CD4-positive, alpha-beta T cell (primary cell): ENCODE measurements at regions of chr19 and their contacts with region 1.

Region 1: DNA sequence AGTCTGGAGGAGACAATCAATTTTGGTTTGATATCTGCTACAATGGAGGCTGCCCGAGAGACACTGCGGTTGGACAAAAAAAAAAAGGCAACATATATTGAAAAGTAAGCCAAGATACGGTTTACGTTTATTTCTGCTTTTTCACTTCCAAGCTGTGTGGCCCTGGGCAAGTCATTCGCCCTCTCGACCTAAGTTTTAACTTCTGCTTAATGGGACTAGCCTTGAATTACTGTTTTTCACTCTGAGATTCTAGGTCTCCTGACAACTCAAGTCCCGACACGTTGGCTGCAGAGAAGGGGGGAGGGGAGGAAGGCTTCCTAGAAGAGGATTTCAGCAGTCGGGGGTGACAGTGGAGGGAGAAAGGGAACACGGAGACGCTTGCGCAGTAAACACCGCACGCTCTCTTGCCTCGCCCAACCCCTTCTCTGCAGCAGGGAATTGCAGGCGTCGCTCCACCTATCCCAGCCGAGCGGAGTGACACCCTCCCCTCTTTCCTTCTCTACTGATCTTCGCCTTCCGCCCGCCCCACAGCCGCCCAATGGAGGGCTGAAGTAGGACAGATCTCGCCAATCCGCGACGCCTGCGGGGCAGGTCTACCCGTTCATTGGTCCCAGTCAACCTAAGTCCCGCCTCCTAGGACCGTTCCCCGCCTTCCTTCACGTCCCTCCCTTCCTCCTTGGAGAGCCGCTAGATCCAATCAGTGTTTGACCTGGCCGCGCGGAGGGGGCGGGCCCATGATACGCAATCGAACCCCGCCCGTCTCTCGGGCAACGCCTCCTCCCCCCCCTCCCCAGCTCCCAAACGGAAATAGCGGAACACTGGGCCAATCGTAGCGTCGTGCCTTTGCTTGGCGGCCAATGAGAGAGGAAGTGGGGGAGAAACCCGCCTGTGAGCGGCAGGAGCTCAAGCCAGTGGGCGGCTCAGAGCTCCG is 529 bp upstream of the AP2A1 start:
- DNase-seq: peak; percentile 98 to 100 (median 99)
- ATAC-seq: peak; percentile 86
- H3K4me3 ChIP-seq: peak overlapping the region; percentile 91
- H3K4me3 Mint-ChIP-seq: peak overlapping the region; percentile 94
- H3K27ac ChIP-seq: peak overlapping the region in 1 of 2 donors; percentile 84
- H3K27ac Mint-ChIP-seq: peak overlapping the region; percentile 76
- H3K4me1 ChIP-seq: peaks cover 32% of the 10 kb centered on the region
- H3K4me1 Mint-ChIP-seq: peaks cover 45% of the 10 kb centered on the region
- H3K27me3 ChIP-seq: no peaks in the 10 kb centered on the region
- H3K27me3 Mint-ChIP-seq: no peaks in the 10 kb centered on the region
- CTCF ChIP-seq: no peak

Region 2: DNA sequence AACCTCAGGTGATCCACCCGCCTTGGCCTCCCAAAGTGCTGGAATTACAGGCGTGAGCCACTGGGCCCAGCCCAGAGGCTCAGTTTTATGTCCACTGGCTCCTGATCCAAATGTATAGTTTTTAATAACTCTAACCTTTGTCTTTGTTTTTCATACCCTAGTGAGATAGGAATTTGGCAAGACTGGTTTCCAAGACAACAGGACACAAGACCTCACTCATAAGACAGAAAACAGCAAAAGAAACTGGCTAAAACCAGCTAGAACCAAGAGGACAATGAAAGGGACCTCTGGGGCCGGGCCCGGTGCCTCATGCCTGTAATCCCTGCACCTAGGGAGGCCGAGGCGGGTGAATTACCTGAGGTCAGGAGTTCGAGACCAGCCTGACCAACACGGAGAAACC is 47.8 kb before region 1 on chr19:
- CTCF ChIA-PET with region 1: interaction called, 5 read pairs
- POLR2A ChIA-PET with region 1: interaction called, 26 read pairs
- intact Hi-C with region 1: loop called (anchors 2 kb)
- DNase-seq: no peak
- ATAC-seq: no peak
- H3K4me3 ChIP-seq: no peak overlapping the region
- H3K4me3 Mint-ChIP-seq: peak overlapping the region; percentile 58
- H3K27ac ChIP-seq: no peak overlapping the region
- H3K27ac Mint-ChIP-seq: peak overlapping the region; percentile 79
- H3K4me1 ChIP-seq: peaks cover 13% of the 10 kb centered on the region
- H3K4me1 Mint-ChIP-seq: peaks cover 13% of the 10 kb centered on the region
- H3K27me3 ChIP-seq: no peaks in the 10 kb centered on the region
- H3K27me3 Mint-ChIP-seq: no peaks in the 10 kb centered on the region
- CTCF ChIP-seq: no peak

Region 3: GRCh38 chr19:49746206-49747091 is 19.8 kb before region 1 on chr19:
- CTCF ChIA-PET with region 1: no interaction called
- POLR2A ChIA-PET with region 1: no interaction called
- intact Hi-C with region 1: no loop called
- DNase-seq: peak in 11 of 14 experiments; percentile 3 to 80 (median 45)
- ATAC-seq: peak; percentile 81
- H3K4me3 ChIP-seq: no peak overlapping the region
- H3K4me3 Mint-ChIP-seq: no peak overlapping the region
- H3K27ac ChIP-seq: no peak overlapping the region
- H3K27ac Mint-ChIP-seq: no peak overlapping the region
- H3K4me1 ChIP-seq: peaks cover 6% of the 10 kb centered on the region
- H3K4me1 Mint-ChIP-seq: no peaks in the 10 kb centered on the region
- H3K27me3 ChIP-seq: no peaks in the 10 kb centered on the region
- H3K27me3 Mint-ChIP-seq: no peaks in the 10 kb centered on the region
- CTCF ChIP-seq: no peak

Region 4: GRCh38 chr19:49850473-49851342 is 84.4 kb after region 1 on chr19 and contains the start of gene PTOV1:
- CTCF ChIA-PET with region 1: no interaction called
- POLR2A ChIA-PET with region 1: interaction called, 12 read pairs
- intact Hi-C with region 1: no loop called
- DNase-seq: peak; percentile 77 to 95 (median 84)
- ATAC-seq: peak; percentile 87
- H3K4me3 ChIP-seq: peak within 1 kb of the TSS; percentile 84
- H3K4me3 Mint-ChIP-seq: peak within 1 kb of the TSS; percentile 98
- H3K27ac ChIP-seq: peak within 1 kb of the TSS; percentile 94 to 95
- H3K27ac Mint-ChIP-seq: peak within 1 kb of the TSS; percentile 94
- H3K4me1 ChIP-seq: peaks cover 54% of the 10 kb centered on the region
- H3K4me1 Mint-ChIP-seq: peaks cover 35% of the 10 kb centered on the region
- H3K27me3 ChIP-seq: no peaks in the 10 kb centered on the region
- H3K27me3 Mint-ChIP-seq: no peaks in the 10 kb centered on the region
- CTCF ChIP-seq: no peak
- total RNA-seq, gene PTOV1: 127 to 134 TPM

Region 5: DNA sequence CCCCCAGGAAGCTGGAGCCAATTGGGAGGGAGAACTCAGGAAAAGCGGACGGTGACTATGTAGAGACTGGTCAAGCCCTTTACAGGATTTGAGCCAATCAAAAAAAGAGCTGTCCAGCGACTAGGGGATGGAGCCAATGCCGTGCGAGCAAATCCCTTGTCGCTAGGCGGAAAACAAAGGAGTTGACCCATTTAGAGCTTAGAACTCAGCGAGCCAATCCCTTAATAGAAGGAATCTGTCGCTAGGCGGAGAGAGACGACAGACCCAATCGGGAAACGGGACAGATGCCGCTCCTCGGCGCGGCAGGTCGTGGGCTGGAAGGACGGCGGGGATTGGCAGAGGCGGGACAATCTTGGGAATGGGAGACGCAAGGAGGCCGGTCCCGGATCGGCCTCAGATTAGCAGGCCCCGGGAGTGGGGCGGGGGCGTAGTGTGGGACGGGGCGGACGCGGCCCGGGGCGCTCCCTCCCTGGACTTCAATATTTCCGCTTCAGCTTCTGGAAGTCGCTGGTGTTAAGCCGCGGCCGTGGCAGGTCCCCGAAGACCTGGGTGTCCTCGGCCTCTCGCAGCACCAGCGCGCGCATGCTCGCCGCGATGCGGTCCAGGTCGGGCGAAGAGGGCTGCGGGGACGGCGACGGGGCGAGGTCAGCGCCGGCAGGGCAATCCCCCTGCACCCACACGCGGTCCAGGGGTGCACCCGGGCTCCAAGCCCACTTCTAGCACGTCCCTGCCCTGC is 103.3 kb after region 1 on chr19:
- CTCF ChIA-PET with region 1: no interaction called
- POLR2A ChIA-PET with region 1: interaction called, 13 read pairs
- intact Hi-C with region 1: loop called in 1 of 2 experiments (anchors 1 kb)
- DNase-seq: peak; percentile 78 to 98 (median 86)
- ATAC-seq: peak; percentile 77
- H3K4me3 ChIP-seq: peak overlapping the region; percentile 61
- H3K4me3 Mint-ChIP-seq: peak overlapping the region; percentile 78
- H3K27ac ChIP-seq: peak overlapping the region; percentile 68 to 76
- H3K27ac Mint-ChIP-seq: no peak overlapping the region
- H3K4me1 ChIP-seq: peaks cover 67% of the 10 kb centered on the region
- H3K4me1 Mint-ChIP-seq: peaks cover 35% of the 10 kb centered on the region
- H3K27me3 ChIP-seq: no peaks in the 10 kb centered on the region
- H3K27me3 Mint-ChIP-seq: no peaks in the 10 kb centered on the region
- CTCF ChIP-seq: no peak

Region 6: GRCh38 chr19:49877020-49877878 is 111.0 kb after region 1 on chr19 and contains the starts of genes AKT1S1 and TBC1D17:
- CTCF ChIA-PET with region 1: no interaction called
- POLR2A ChIA-PET with region 1: interaction called, 14 read pairs
- intact Hi-C with region 1: loop called (anchors 1 to 5 kb)
- DNase-seq: peak; percentile 95 to 100 (median 98)
- ATAC-seq: peak; percentile 60
- H3K4me3 ChIP-seq: peak within 1 kb of the TSS; percentile 88
- H3K4me3 Mint-ChIP-seq: no peak within 1 kb of the TSS
- H3K27ac ChIP-seq: peak within 1 kb of the TSS; percentile 98 to 100
- H3K27ac Mint-ChIP-seq: no peak within 1 kb of the TSS
- H3K4me1 ChIP-seq: peaks cover 35% of the 10 kb centered on the region
- H3K4me1 Mint-ChIP-seq: peaks cover 18% of the 10 kb centered on the region
- H3K27me3 ChIP-seq: no peaks in the 10 kb centered on the region
- H3K27me3 Mint-ChIP-seq: no peaks in the 10 kb centered on the region
- CTCF ChIP-seq: no peak
- total RNA-seq, gene AKT1S1: 15.1 to 15.8 TPM
- total RNA-seq, gene TBC1D17: 35.5 to 35.8 TPM